MCF 10A (cell line): ENCODE measurements at regions of chr3 and their contacts with region 1.

Region 1: GRCh38 chr3:51941798-51942602 is at the starts of genes PARP3 and RRP9:
- DNase-seq: peak; percentile 100
- H3K4me3 Mint-ChIP-seq: peak within 1 kb of the TSS; percentile 92
- H3K27ac Mint-ChIP-seq: peak within 1 kb of the TSS; percentile 95
- H3K4me1 Mint-ChIP-seq: peaks cover 16% of the 10 kb centered on the region
- H3K27me3 Mint-ChIP-seq: no peaks in the 10 kb centered on the region
- CTCF ChIP-seq: peak; percentile 96
- total RNA-seq, gene PARP3: 19.4 and 25.5 TPM in 2 replicates
- total RNA-seq, gene RRP9: 60.8 and 80.2 TPM in 2 replicates

Region 2: GRCh38 chr3:51953445-51953844 is 11.4 kb after region 1 on chr3:
- CTCF ChIA-PET with region 1: interaction called, 13 read pairs
- POLR2A ChIA-PET with region 1: interaction called, 5 read pairs
- intact Hi-C with region 1: no loop called
- DNase-seq: peak; percentile 78
- H3K4me3 Mint-ChIP-seq: no peak overlapping the region
- H3K27ac Mint-ChIP-seq: peak overlapping the region; percentile 5
- H3K4me1 Mint-ChIP-seq: peaks cover 14% of the 10 kb centered on the region
- H3K27me3 Mint-ChIP-seq: no peaks in the 10 kb centered on the region
- CTCF ChIP-seq: no peak

Region 3: GRCh38 chr3:51974963-51975851 is 33.2 kb after region 1 on chr3 and contains the start of gene ABHD14A:
- CTCF ChIA-PET with region 1: interaction called, 49 read pairs
- POLR2A ChIA-PET with region 1: interaction called, 127 read pairs
- intact Hi-C with region 1: loop called (anchors 1 kb)
- DNase-seq: peak; percentile 72
- H3K4me3 Mint-ChIP-seq: peak within 1 kb of the TSS; percentile 99
- H3K27ac Mint-ChIP-seq: peak within 1 kb of the TSS; percentile 88
- H3K4me1 Mint-ChIP-seq: peaks cover 29% of the 10 kb centered on the region
- H3K27me3 Mint-ChIP-seq: no peaks in the 10 kb centered on the region
- CTCF ChIP-seq: no peak
- total RNA-seq, gene ABHD14A: 4.0 and 8.1 TPM in 2 replicates

Region 4: GRCh38 chr3:51995346-51996163 is 53.6 kb after region 1 on chr3 and contains the start of gene RPL29:
- CTCF ChIA-PET with region 1: interaction called, 8 read pairs
- POLR2A ChIA-PET with region 1: interaction called, 44 read pairs
- intact Hi-C with region 1: loop called (anchors 1 kb)
- DNase-seq: peak; percentile 94
- H3K4me3 Mint-ChIP-seq: peak within 1 kb of the TSS; percentile 96
- H3K27ac Mint-ChIP-seq: peak within 1 kb of the TSS; percentile 100
- H3K4me1 Mint-ChIP-seq: peaks cover 8% of the 10 kb centered on the region
- H3K27me3 Mint-ChIP-seq: no peaks in the 10 kb centered on the region
- CTCF ChIP-seq: no peak
- total RNA-seq, gene RPL29: 1,551 and 1,602 TPM in 2 replicates

Region 5: DNA sequence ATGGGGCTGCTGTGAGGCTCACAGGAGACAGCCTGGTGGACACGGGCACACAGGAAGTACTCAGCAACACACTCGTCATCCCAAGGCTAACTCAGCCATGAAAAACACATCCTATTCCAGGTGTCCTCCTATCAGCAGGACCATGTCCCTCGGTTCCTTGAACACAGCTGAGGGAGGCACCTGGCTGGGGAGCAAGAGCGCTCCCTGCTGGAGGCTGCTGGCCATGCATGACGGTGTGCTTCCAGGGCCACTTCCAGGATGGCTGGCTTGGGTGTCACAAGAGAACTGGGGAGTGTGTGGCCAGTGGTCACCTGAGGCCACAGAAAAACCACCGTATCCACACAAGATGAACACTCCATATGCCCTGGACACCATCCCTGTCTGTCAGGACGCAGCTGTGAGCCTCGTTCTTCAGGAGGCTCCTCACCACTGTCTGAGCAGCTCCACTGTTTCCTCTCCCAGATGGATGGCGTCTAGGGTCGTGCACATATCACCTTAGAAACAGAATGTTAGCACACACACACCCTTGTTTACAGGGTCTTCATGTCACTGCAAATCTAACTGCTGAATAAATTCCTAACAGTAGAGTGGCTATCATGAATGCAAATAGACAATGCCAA is 181.2 kb after region 1 on chr3:
- CTCF ChIA-PET with region 1: interaction called, 3 read pairs
- POLR2A ChIA-PET with region 1: no interaction called
- intact Hi-C with region 1: loop called (anchors 5 kb)
- DNase-seq: peak; percentile 75
- H3K4me3 Mint-ChIP-seq: no peak overlapping the region
- H3K27ac Mint-ChIP-seq: peak overlapping the region; percentile 49
- H3K4me1 Mint-ChIP-seq: peaks cover 18% of the 10 kb centered on the region
- H3K27me3 Mint-ChIP-seq: no peaks in the 10 kb centered on the region
- CTCF ChIP-seq: peak; percentile 94

Region 6: GRCh38 chr3:52154117-52155094 is 212.4 kb after region 1 on chr3 and contains the start of gene POC1A:
- CTCF ChIA-PET with region 1: no interaction called
- POLR2A ChIA-PET with region 1: interaction called, 14 read pairs
- intact Hi-C with region 1: no loop called
- DNase-seq: peak; percentile 99
- H3K4me3 Mint-ChIP-seq: peak within 1 kb of the TSS; percentile 93
- H3K27ac Mint-ChIP-seq: peak within 1 kb of the TSS; percentile 96
- H3K4me1 Mint-ChIP-seq: peaks cover 10% of the 10 kb centered on the region
- H3K27me3 Mint-ChIP-seq: no peaks in the 10 kb centered on the region
- CTCF ChIP-seq: no peak
- total RNA-seq, gene POC1A: 7.5 and 9.8 TPM in 2 replicates